ENCODE measurements at regions of chr19 and their contacts with region 1.

Region 1: GRCh38 chr19:1949304-1950101 is 8.5 kb downstream of the CSNK1G2 start:
- DNase-seq: no peak
- H3K4me3 ChIP-seq: no peak overlapping the region
- H3K27ac ChIP-seq: no peak overlapping the region
- H3K4me1 ChIP-seq: peaks cover under 1% of the 10 kb centered on the region
- H3K27me3 ChIP-seq: no peaks in the 10 kb centered on the region
- CTCF ChIP-seq: no peak

Region 2: GRCh38 chr19:2164020-2164998 is 214.8 kb after region 1 on chr19:
- CTCF ChIA-PET with region 1: no interaction called
- POLR2A ChIA-PET with region 1: interaction called, 12 read pairs
- intact Hi-C with region 1: no loop called
- DNase-seq: peak; percentile 51
- H3K4me3 ChIP-seq: peak overlapping the region; percentile 91
- H3K27ac ChIP-seq: peak overlapping the region; percentile 86
- H3K4me1 ChIP-seq: peaks cover 14% of the 10 kb centered on the region
- H3K27me3 ChIP-seq: no peaks in the 10 kb centered on the region
- CTCF ChIP-seq: no peak

Measured in A673 (cell line).